ENCODE measurements at regions of chr18 and their contacts with region 1.

Region 1: GRCh38 chr18:36284671-36285295 is 12.7 kb upstream of the FHOD3 start:
- DNase-seq: no peak
- ATAC-seq: peak; percentile 61 to 77 (median 67)
- H3K4me3 ChIP-seq: no peak overlapping the region
- H3K27ac ChIP-seq: no peak overlapping the region
- H3K4me1 ChIP-seq: no peaks in the 10 kb centered on the region
- H3K27me3 ChIP-seq: peaks cover 0 to 2% (median 0%) of the 10 kb centered on the region in 3 donors
- CTCF ChIP-seq: peak; percentile 93

Region 2: GRCh38 chr18:36095936-36096519 is 188.8 kb before region 1 on chr18:
- intact Hi-C with region 1: loop called (anchors 2 to 5 kb)
- DNase-seq: no peak
- ATAC-seq: peak in 1 of 4 donors; percentile 68
- H3K4me3 ChIP-seq: no peak overlapping the region
- H3K27ac ChIP-seq: no peak overlapping the region
- H3K4me1 ChIP-seq: no peaks in the 10 kb centered on the region
- H3K27me3 ChIP-seq: no peaks in the 10 kb centered on the region
- CTCF ChIP-seq: peak; percentile 66